ENCODE measurements at regions of chr18 and their contacts with region 1.

Region 1: GRCh38 chr18:23629444-23629946 is 33.2 kb downstream of the ANKRD29 start:
- DNase-seq: no peak
- H3K4me3 Mint-ChIP-seq: no peak overlapping the region
- H3K27ac Mint-ChIP-seq: no peak overlapping the region
- H3K4me1 Mint-ChIP-seq: peaks cover 8% of the 10 kb centered on the region
- H3K27me3 Mint-ChIP-seq: no peaks in the 10 kb centered on the region

Region 2: DNA sequence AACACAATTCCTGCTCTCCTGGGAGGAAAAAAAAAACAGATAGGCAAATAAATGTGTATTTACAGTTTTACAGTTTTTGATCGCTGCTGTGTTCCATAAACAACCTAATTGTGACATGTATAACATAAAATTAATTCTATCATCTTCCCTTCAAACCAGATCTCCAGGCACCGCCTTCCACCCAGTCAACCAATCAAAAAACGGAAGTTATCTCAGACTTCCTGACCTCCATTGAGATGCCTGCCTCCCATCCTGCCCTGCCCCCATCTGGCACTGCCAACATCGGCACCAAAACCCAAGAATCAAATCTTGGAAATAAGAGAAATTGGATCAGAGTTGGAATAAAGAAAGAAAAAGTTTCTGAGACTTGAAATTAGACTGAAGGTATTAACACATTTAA is 179.5 kb before region 1 on chr18:
- CTCF ChIA-PET with region 1: no interaction called
- intact Hi-C with region 1: no loop called
- DNase-seq: no peak
- H3K4me3 Mint-ChIP-seq: no peak overlapping the region
- H3K27ac Mint-ChIP-seq: no peak overlapping the region
- H3K4me1 Mint-ChIP-seq: peaks cover 26% of the 10 kb centered on the region
- H3K27me3 Mint-ChIP-seq: no peaks in the 10 kb centered on the region

Region 3: GRCh38 chr18:23573626-23574431 is 55.7 kb before region 1 on chr18:
- CTCF ChIA-PET with region 1: no interaction called
- intact Hi-C with region 1: no loop called
- DNase-seq: peak; percentile 64
- H3K4me3 Mint-ChIP-seq: no peak overlapping the region
- H3K27ac Mint-ChIP-seq: peak overlapping the region; percentile 83
- H3K4me1 Mint-ChIP-seq: peaks cover 32% of the 10 kb centered on the region
- H3K27me3 Mint-ChIP-seq: no peaks in the 10 kb centered on the region

Region 4: GRCh38 chr18:24138789-24139616 is 509.5 kb after region 1 on chr18 and contains the start of gene CABYR:
- CTCF ChIA-PET with region 1: no interaction called
- intact Hi-C with region 1: loop called (anchors 5 kb)
- DNase-seq: peak; percentile 86
- H3K4me3 Mint-ChIP-seq: peak within 1 kb of the TSS; percentile 90
- H3K27ac Mint-ChIP-seq: no peak within 1 kb of the TSS
- H3K4me1 Mint-ChIP-seq: peaks cover 7% of the 10 kb centered on the region
- H3K27me3 Mint-ChIP-seq: peaks cover 11% of the 10 kb centered on the region
- total RNA-seq, gene CABYR: 1.2 to 1.7 TPM

Region 5: DNA sequence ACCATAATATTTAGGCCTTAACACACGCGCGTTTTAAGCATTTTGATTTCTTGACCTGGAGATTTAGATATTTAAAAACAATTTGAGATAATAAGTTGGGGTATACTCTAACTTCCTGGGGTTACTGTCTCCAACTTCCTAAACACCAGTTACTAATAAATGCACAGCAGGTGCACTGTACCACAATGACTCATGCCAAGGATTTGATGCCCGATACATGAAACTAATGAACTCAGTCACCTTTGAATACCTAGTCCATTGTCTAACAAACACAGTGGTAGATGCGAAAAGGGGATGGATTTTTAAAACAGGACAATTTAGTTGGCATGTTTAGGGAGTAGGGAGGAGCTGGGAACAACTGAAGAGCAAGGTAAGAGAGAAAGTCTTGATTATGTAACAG is 530.6 kb after region 1 on chr18:
- CTCF ChIA-PET with region 1: no interaction called
- intact Hi-C with region 1: no loop called
- DNase-seq: no peak
- H3K4me3 Mint-ChIP-seq: no peak overlapping the region
- H3K27ac Mint-ChIP-seq: no peak overlapping the region
- H3K4me1 Mint-ChIP-seq: no peaks in the 10 kb centered on the region
- H3K27me3 Mint-ChIP-seq: no peaks in the 10 kb centered on the region

Measured in activated naive CD4-positive, alpha-beta T cell treated with anti-CD3 and anti-CD28 coated beads for 36 hours (primary cell).